Mammary epithelial cell (primary cell): ENCODE measurements at regions of chrX and their contacts with region 1.

Region 1: GRCh38 chrX:128518508-128518907 is 466.3 kb upstream of the ACTRT1 start:
- DNase-seq: peak; percentile 7
- H3K4me3 ChIP-seq: no peak overlapping the region
- H3K27ac ChIP-seq: no peak overlapping the region
- H3K4me1 ChIP-seq: no peaks in the 10 kb centered on the region
- H3K27me3 ChIP-seq: no peaks in the 10 kb centered on the region
- CTCF ChIP-seq: peak; percentile 53 to 79

Region 2: DNA sequence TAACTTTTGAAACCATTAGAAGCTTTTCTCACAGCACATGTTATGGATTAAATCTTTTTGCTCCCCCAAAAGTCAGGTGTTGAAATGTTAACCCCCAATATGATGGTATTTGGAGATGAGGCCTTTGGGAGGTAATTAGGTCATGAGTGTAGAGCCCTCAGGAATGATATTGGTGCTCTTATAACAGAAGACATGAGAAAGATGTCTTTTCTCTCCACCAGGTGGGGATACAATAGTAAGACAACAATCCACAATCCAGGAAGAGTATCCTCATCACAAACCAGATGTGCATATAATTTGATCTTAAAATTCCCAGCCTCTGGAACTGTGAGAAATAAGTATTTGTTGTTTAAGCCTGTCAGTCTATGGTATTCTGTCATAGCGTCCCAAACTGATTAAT is 266.9 kb before region 1 on chrX:
- CTCF ChIA-PET with region 1: no interaction called
- dilution Hi-C with region 1: no loop called
- in situ Hi-C with region 1: loop called in 1 of 2 experiments (anchors 10 kb)
- intact Hi-C with region 1: loop called (anchors 1 kb)
- DNase-seq: no peak
- H3K4me3 ChIP-seq: no peak overlapping the region
- H3K27ac ChIP-seq: no peak overlapping the region
- H3K4me1 ChIP-seq: no peaks in the 10 kb centered on the region
- H3K27me3 ChIP-seq: no peaks in the 10 kb centered on the region
- CTCF ChIP-seq: peak in 1 of 2 donors; percentile 45